Heart left ventricle (tissue), 16 donors: ENCODE measurements at regions of chr2 and their contacts with region 1.

Region 1: GRCh38 chr2:230847883-230848388 is 16.8 kb upstream of the ITM2C start:
- DNase-seq: peak; percentile 82 to 92 (median 84)
- ATAC-seq: peak in 3 of 4 donors; percentile 87 to 94 (median 88)
- H3K4me3 ChIP-seq: peak overlapping the region in 6 of 12 donors; percentile 15 to 38 (median 30)
- H3K27ac ChIP-seq: no peak overlapping the region
- H3K4me1 ChIP-seq: peaks cover 0 to 9% (median 0%) of the 10 kb centered on the region in 12 donors
- H3K27me3 ChIP-seq: peaks cover 0 to 47% (median 13%) of the 10 kb centered on the region in 9 donors
- CTCF ChIP-seq: peak; percentile 77 to 97 (median 90)
- POLR2A ChIP-seq: no peak

Region 2: DNA sequence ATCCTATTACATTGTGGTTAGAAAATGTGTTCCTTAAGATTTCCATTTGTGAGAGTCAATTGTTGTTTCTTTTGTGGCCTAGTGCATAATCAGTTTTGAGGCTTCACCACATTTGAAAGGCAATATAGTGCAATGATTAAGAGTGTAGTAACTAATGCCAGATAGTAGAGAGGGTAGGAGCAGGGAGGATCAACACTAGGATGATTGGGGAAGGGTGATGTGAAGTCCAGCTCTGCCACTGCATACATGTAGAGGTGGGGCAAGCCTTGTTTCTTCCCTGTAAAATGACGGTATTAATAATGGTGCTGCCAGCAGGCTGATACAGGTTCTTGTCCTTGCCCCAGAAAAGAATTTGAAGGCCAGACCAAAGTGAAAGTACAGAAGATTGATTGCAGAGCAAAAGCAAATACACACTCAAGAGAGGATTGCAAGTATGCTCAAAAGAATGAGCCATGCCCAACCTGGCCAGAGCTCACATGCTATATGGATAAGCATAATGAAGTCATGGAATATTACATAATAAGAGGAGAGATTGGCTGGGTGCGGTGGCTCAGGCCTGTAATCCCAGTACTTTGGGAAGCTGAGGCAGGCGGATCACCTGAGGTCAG is 424.0 kb before region 1 on chr2:
- intact Hi-C with region 1: no loop called
- DNase-seq: no peak
- ATAC-seq: peak in 3 of 4 donors; percentile 50 to 69 (median 50)
- H3K4me3 ChIP-seq: peak overlapping the region in 1 of 12 donors; percentile 7
- H3K27ac ChIP-seq: peak overlapping the region in 6 of 12 donors; percentile 4 to 47 (median 30)
- H3K4me1 ChIP-seq: peaks cover 6 to 81% (median 54%) of the 10 kb centered on the region in 12 donors
- H3K27me3 ChIP-seq: no peaks in the 10 kb centered on the region
- CTCF ChIP-seq: no peak
- POLR2A ChIP-seq: no peak

Region 3: GRCh38 chr2:230987137-230988020 is 139.4 kb after region 1 on chr2:
- intact Hi-C with region 1: loop called in 5 of 10 experiments (anchors 1 to 5 kb)
- DNase-seq: peak; percentile 72 to 90 (median 77)
- ATAC-seq: peak; percentile 64 to 94 (median 84)
- H3K4me3 ChIP-seq: peak overlapping the region in 11 of 12 donors; percentile 10 to 48 (median 39)
- H3K27ac ChIP-seq: no peak overlapping the region
- H3K4me1 ChIP-seq: peaks cover 0 to 5% (median 4%) of the 10 kb centered on the region in 12 donors
- H3K27me3 ChIP-seq: peaks cover 7 to 39% (median 27%) of the 10 kb centered on the region in 9 donors
- CTCF ChIP-seq: peak; percentile 89 to 97 (median 95)
- POLR2A ChIP-seq: no peak